ENCODE measurements at regions of chr17 and their contacts with region 1.

Region 1: DNA sequence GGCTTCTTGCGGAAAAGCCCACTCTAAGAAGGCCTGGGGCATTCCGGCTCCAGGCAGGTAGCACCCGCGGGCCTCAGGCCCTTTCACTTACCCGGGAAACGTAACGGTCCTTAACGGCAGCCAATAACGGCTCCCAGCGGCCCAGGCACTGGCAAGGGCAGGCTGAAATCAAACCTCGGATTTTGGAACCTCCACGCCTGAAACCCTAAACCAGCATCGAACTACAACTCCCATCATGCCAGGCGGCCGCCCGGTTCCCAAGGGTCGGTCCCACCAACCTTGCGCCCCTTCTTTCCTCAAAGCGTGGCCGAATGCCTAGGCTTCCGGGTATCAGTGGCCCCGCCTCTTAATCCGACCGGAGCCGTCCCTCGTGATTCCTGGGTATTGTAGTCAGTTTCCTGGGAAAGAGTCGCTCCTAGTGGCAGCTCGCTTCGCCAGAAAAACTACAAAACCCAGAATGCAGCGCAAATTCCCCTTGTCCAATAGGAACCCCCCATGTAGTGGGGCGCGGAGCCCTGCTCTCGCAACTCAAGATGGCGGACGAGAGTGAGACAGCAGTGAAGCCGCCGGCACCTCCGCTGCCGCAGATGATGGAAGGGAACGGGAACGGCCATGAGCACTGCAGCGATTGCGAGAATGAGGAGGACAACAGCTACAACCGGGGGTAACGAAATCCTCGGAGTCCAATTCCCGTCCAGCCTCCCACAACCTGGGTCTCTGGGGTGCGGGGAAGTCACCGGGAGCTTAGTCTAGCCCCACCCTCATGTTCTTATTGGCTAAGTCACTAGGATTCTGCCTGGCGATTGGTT is at the start of gene NMT1:
- DNase-seq: peak; percentile 97
- ATAC-seq: peak; percentile 92
- H3K4me3 Mint-ChIP-seq: peak within 1 kb of the TSS; percentile 84
- H3K27ac Mint-ChIP-seq: peak within 1 kb of the TSS; percentile 96
- H3K4me1 Mint-ChIP-seq: peaks cover 42% of the 10 kb centered on the region
- H3K27me3 Mint-ChIP-seq: no peaks in the 10 kb centered on the region
- total RNA-seq, gene NMT1: 170 to 175 TPM

Region 2: GRCh38 chr17:44141717-44142285 is 919.2 kb before region 1 on chr17 and contains the start of gene HROB:
- CTCF ChIA-PET with region 1: no interaction called
- POLR2A ChIA-PET with region 1: no interaction called
- intact Hi-C with region 1: loop called in 1 of 2 experiments (anchors 5 kb)
- DNase-seq: peak; percentile 99
- ATAC-seq: peak; percentile 83
- H3K4me3 Mint-ChIP-seq: peak within 1 kb of the TSS; percentile 91
- H3K27ac Mint-ChIP-seq: peak within 1 kb of the TSS; percentile 85
- H3K4me1 Mint-ChIP-seq: peaks cover 24% of the 10 kb centered on the region
- H3K27me3 Mint-ChIP-seq: peaks cover 2% of the 10 kb centered on the region
- total RNA-seq, gene HROB: 17.1 to 23.3 TPM

Region 3: GRCh38 chr17:44708401-44709181 is 352.4 kb before region 1 on chr17 and contains the start of gene DBF4B:
- CTCF ChIA-PET with region 1: no interaction called
- POLR2A ChIA-PET with region 1: no interaction called
- intact Hi-C with region 1: loop called in 1 of 2 experiments (anchors 1 kb)
- DNase-seq: peak; percentile 89
- ATAC-seq: peak; percentile 85
- H3K4me3 Mint-ChIP-seq: no peak within 1 kb of the TSS
- H3K27ac Mint-ChIP-seq: no peak within 1 kb of the TSS
- H3K4me1 Mint-ChIP-seq: peaks cover 5% of the 10 kb centered on the region
- H3K27me3 Mint-ChIP-seq: peaks cover 5% of the 10 kb centered on the region
- total RNA-seq, gene DBF4B: 23.5 to 26.4 TPM

Region 4: DNA sequence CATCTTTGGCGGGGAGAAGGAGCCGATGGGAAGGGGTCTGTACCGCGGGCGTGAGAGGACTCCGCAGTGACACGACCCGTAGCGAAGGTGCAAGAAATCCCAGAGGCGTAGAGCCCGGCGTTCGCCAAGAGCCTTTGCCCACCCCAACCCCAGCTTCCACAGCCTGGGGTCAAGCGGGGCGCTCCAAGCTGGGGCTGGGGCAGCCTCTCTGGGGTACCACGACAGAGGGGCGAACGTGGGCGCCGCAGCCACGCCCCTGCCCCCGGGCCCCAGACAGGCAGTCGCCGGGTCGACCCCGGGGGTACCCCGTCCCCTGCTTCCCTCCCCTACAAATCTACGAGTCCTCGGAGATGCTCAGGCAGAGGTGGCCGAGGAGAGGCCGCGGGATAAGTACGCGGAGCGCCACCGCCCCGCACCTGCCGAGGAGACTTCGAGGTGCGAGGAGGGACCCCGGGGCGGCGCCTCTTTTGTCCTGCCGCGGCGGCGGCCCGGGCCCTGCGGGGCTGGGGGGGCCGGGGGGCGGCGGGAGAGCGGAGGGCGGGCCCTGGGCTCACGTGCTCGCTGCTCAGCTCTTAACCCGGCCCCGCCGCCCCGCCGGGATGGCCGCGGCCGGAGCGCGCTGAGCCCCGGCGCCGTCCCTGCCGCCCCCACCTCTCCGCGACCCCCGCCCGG is 302.5 kb before region 1 on chr17 and contains the start of gene ADAM11:
- CTCF ChIA-PET with region 1: no interaction called
- POLR2A ChIA-PET with region 1: no interaction called
- intact Hi-C with region 1: no loop called
- DNase-seq: no peak
- ATAC-seq: peak; percentile 17
- H3K4me3 Mint-ChIP-seq: no peak within 1 kb of the TSS
- H3K27ac Mint-ChIP-seq: no peak within 1 kb of the TSS
- H3K4me1 Mint-ChIP-seq: no peaks in the 10 kb centered on the region
- H3K27me3 Mint-ChIP-seq: peaks cover 27% of the 10 kb centered on the region
- total RNA-seq, gene ADAM11: 0.19 to 0.55 TPM

Region 5: DNA sequence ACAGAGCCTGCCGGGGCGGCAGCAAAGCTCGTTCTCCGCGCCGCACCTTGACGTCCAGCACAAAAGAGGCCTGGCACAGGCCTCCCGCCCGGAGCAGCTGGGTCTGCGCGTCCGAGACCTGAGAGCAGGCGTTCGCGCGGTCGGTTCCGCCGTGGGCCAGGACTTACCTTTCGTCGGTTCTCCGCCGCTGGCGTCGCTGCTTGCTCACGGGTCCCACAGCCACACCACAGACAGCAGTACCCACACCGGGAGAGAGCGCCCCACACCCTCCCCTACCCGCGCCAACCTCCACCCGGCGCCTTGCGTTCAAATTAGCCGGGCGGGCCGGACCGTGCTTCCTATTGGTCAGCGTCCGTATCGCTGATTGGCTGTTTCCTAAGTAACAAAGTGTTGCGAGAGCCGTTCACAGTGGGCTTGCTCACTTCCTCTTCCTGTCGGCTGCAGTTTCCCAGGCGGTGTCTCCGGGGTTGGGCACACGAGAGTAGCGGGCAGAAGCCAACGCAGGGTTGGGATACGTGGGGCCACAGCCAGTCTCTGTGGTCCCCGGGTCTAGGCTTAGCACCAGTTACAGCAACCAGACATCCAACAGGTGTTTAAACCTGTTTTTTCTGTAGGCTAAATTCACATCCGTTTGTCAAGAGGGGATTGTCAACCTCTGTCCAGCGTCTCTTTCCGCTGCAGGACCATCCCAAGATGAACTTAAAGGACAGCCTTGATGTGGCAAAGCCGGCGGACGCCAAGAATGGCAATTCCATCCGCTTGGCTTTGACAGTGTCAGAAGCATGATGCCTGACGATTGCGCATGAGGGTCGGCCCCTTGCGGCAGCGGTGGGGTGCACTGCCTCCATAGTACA is 113.3 kb before region 1 on chr17 and contains the start of gene KIF18B:
- CTCF ChIA-PET with region 1: no interaction called
- POLR2A ChIA-PET with region 1: no interaction called
- intact Hi-C with region 1: loop called in 1 of 2 experiments (anchors 1 kb)
- DNase-seq: peak; percentile 96
- ATAC-seq: peak; percentile 98
- H3K4me3 Mint-ChIP-seq: peak within 1 kb of the TSS; percentile 90
- H3K27ac Mint-ChIP-seq: peak within 1 kb of the TSS; percentile 88
- H3K4me1 Mint-ChIP-seq: peaks cover 4% of the 10 kb centered on the region
- H3K27me3 Mint-ChIP-seq: no peaks in the 10 kb centered on the region
- total RNA-seq, gene KIF18B: 38.9 to 48.7 TPM

Region 6: DNA sequence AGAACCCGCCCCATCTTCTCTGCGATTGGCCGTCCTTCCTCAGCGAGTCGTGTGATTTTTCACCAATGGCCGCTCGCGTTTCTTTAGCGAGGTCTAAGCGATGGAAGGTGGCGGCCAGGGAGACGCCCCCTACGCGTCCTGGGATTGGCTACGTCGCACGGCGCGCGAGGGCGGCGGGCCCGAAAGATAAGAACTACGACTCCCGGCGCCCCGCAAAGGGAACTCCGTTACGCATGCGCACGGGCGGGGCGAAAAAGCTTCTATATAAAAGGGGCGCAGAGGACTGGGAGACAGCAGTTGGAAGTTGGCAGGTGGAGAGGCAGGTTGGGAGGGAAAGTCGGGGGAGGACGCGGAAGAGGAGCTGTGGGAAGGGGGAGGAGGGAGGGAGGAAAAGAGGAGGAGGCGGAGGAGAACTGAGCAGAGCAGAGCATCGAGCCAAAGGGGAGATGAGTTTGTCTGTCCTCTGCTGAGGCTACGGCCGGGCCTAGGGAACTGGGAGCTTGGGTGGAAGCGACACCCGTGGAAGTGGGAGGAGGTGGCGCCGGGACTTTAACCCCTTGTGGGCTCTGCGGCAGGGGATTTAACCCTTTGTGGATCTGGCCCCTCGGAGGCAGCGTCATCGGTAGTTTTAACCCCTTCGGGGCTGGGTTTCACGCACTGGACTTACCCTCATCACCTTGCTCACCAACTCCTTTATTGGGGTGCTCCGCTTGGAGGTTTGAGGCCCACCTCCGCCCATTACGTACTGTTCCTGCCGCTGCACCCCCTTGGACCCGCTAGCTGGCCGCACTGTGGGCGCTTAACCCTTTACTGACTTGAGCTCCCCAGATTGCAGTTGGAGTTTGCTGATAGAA is 87.4 kb after region 1 on chr17 and contains the start of gene HEXIM1:
- CTCF ChIA-PET with region 1: interaction called, 4 read pairs
- POLR2A ChIA-PET with region 1: interaction called, 26 read pairs
- intact Hi-C with region 1: loop called (anchors 1 to 5 kb)
- DNase-seq: peak; percentile 99
- ATAC-seq: peak; percentile 78
- H3K4me3 Mint-ChIP-seq: peak within 1 kb of the TSS; percentile 99
- H3K27ac Mint-ChIP-seq: peak within 1 kb of the TSS; percentile 100
- H3K4me1 Mint-ChIP-seq: peaks cover 37% of the 10 kb centered on the region
- H3K27me3 Mint-ChIP-seq: no peaks in the 10 kb centered on the region
- total RNA-seq, gene HEXIM1: 27.1 to 27.3 TPM

Region 7: GRCh38 chr17:45317112-45317928 is 256.3 kb after region 1 on chr17:
- CTCF ChIA-PET with region 1: no interaction called
- POLR2A ChIA-PET with region 1: no interaction called
- intact Hi-C with region 1: loop called in 1 of 2 experiments (anchors 1 kb)
- DNase-seq: peak; percentile 100
- ATAC-seq: peak; percentile 81
- H3K4me3 Mint-ChIP-seq: peak overlapping the region; percentile 91
- H3K27ac Mint-ChIP-seq: peak overlapping the region; percentile 89
- H3K4me1 Mint-ChIP-seq: peaks cover 65% of the 10 kb centered on the region
- H3K27me3 Mint-ChIP-seq: no peaks in the 10 kb centered on the region

Measured in activated CD4-positive, alpha-beta T cell treated with anti-CD3 and anti-CD28 coated beads for 36 hours (primary cell).